ENCODE measurements at regions of chr2 and their contacts with region 1.

Region 1: GRCh38 chr2:205721057-205721449 is 38.8 kb downstream of the NRP2 start:
- DNase-seq: peak; percentile 34
- ATAC-seq: peak; percentile 66
- H3K4me3 Mint-ChIP-seq: peak overlapping the region; percentile 30; the same call in 1 of the 2 replicates
- H3K27ac Mint-ChIP-seq: peak overlapping the region; percentile 90
- H3K4me1 Mint-ChIP-seq: peaks cover 42% of the 10 kb centered on the region
- H3K27me3 Mint-ChIP-seq: no peaks in the 10 kb centered on the region
- CTCF ChIP-seq: no peak

Region 2: DNA sequence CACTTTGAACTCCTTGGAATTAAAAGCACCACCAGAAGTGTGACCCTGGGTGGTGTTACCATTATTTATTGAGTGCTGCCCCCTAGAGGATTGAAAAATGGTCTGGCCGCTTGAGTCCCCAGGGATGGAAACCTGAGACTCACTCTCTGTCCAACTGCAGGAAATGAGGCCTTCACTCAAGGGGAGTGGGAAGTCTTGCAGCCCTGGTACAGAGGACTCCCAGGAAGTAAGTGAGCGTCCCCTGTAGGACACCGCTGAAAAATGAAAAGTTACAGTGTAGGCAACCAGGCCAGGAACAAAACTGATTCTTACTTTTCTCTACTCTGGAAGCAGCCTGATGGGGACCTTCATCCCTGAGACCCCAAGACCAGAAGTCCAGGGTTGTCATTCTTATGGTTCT is 41.0 kb before region 1 on chr2:
- CTCF ChIA-PET with region 1: interaction called, 41 read pairs
- POLR2A ChIA-PET with region 1: interaction called, 11 read pairs
- DNase-seq: peak; percentile 77
- ATAC-seq: peak; percentile 78
- H3K4me3 Mint-ChIP-seq: no peak overlapping the region
- H3K27ac Mint-ChIP-seq: no peak overlapping the region; the same call in 1 of the 2 replicates
- H3K4me1 Mint-ChIP-seq: peaks cover 59% of the 10 kb centered on the region
- H3K27me3 Mint-ChIP-seq: peaks cover 37% of the 10 kb centered on the region
- CTCF ChIP-seq: peak; percentile 50

Region 3: DNA sequence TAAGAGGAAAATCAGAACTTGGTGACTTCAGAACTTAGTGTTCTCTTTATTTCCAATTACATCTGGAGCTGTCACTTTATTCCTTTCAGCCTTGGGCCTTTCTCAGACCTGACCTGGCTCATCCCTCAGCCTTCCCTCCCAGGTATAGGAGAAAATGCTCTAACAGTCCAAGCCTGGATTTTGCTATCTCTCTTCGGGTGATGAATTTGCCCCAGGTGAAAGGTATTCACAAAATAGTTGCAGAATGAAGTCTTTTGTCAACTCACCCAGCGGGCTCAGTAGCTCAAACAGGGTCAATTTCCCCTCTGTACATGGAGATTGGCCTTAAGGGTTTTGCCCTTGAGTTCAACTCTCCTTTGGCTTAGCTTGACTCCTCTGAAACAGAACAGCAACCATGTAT is 26.8 kb before region 1 on chr2:
- CTCF ChIA-PET with region 1: interaction called, 15 read pairs
- POLR2A ChIA-PET with region 1: no interaction called
- DNase-seq: no peak
- ATAC-seq: no peak
- H3K4me3 Mint-ChIP-seq: no peak overlapping the region
- H3K27ac Mint-ChIP-seq: no peak overlapping the region
- H3K4me1 Mint-ChIP-seq: peaks cover 70% of the 10 kb centered on the region
- H3K27me3 Mint-ChIP-seq: peaks cover 7% of the 10 kb centered on the region
- CTCF ChIP-seq: no peak

Region 4: DNA sequence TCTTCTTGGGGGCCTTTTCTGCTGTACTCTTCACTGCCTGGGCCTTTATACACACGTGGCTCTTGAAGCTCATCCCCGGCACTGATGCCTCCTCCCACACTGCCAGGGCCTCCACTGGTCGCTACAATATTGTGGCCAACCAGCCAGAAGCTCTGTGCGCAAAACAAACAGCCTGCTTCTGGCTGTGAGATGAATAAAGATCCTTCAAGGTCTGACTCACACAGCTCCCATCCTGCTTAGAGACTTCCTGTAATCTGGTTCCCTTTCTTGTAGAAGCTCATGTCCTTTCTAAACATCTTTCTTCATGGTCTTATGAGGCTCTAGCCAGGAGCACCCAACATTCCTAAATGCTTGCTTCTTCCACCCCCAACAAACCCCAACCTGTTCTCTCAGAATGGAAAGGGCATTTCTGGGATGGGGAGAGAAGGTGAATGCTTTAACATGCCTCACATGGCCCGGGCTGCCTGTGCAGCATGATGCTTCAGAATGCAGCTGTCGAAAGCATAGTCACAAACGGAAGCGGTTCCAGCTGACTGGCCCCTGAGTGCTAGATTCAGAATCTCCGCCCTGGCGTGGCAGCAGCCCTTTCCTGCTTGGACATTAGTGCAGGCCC is 14.2 kb before region 1 on chr2:
- CTCF ChIA-PET with region 1: interaction called, 17 read pairs
- POLR2A ChIA-PET with region 1: no interaction called
- DNase-seq: no peak
- ATAC-seq: peak; percentile 17; the same call in 1 of the 2 replicates
- H3K4me3 Mint-ChIP-seq: no peak overlapping the region
- H3K27ac Mint-ChIP-seq: no peak overlapping the region
- H3K4me1 Mint-ChIP-seq: peaks cover 43% of the 10 kb centered on the region
- H3K27me3 Mint-ChIP-seq: no peaks in the 10 kb centered on the region
- CTCF ChIP-seq: no peak

Region 5: GRCh38 chr2:205741256-205741978 is 20.4 kb after region 1 on chr2:
- CTCF ChIA-PET with region 1: interaction called, 10 read pairs
- POLR2A ChIA-PET with region 1: no interaction called
- DNase-seq: no peak
- ATAC-seq: no peak
- H3K4me3 Mint-ChIP-seq: no peak overlapping the region
- H3K27ac Mint-ChIP-seq: no peak overlapping the region
- H3K4me1 Mint-ChIP-seq: peaks cover 17% of the 10 kb centered on the region
- H3K27me3 Mint-ChIP-seq: no peaks in the 10 kb centered on the region
- CTCF ChIP-seq: no peak

Region 6: GRCh38 chr2:205822578-205822977 is 101.5 kb after region 1 on chr2:
- CTCF ChIA-PET with region 1: no interaction called
- POLR2A ChIA-PET with region 1: no interaction called
- DNase-seq: no peak
- ATAC-seq: no peak
- H3K4me3 Mint-ChIP-seq: no peak overlapping the region
- H3K27ac Mint-ChIP-seq: no peak overlapping the region
- H3K4me1 Mint-ChIP-seq: peaks cover 20% of the 10 kb centered on the region
- H3K27me3 Mint-ChIP-seq: no peaks in the 10 kb centered on the region; the same call in 1 of the 2 replicates
- CTCF ChIP-seq: no peak

Region 7: DNA sequence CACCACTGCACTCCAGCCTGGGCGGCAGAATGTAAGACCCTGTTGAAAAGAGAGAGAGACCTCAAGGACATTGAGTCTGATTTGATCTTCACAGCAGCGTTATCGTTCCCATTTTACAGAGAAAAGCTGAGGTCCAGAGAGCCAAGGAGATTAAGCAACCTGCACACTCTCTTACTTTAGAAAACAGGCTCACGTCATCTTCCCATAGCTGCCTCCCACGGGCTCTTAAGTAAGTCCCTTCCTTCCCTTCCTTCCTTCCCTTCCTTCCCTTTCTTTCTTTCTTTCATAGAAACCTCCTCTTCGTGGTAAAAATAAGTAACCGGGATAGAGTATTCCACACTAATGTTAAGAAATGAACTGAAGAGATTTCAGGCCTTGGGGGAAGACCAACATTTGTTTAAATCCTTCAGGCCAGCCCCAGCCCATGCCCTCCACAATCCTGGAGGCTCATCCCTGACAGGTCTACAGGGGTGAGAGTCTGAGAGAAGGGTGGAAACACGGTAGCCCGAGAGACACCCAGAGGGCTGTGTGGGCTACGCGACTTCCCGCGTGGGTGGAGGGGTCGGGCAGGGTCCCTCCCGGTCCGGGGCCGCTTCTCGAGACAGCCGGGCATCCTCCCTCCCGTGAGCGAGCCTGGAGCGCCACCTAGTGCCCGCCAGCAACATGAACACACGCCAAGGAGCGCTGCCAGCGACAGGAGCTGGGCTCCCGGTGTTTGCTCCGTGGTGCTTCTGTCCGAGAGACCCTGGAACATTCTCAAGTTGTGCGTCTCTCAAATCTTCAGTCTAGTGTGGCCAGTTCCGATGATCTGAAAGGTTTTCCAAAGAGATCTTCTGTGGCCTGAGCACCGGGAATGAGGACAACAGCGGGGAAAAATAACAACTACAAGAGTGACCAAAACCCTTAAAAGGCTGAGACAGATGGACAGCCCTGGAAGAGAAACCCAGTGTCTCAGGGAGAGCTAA is 204.6 kb after region 1 on chr2:
- CTCF ChIA-PET with region 1: interaction called, 16 read pairs
- POLR2A ChIA-PET with region 1: no interaction called
- DNase-seq: peak; percentile 89
- ATAC-seq: peak; percentile 97
- H3K4me3 Mint-ChIP-seq: peak overlapping the region; percentile 60
- H3K27ac Mint-ChIP-seq: no peak overlapping the region
- H3K4me1 Mint-ChIP-seq: peaks cover 24% of the 10 kb centered on the region
- H3K27me3 Mint-ChIP-seq: peaks cover 27% of the 10 kb centered on the region
- CTCF ChIP-seq: peak; percentile 96